CD8-positive, alpha-beta memory T cell (primary cell): ENCODE measurements at regions of chr2 and their contacts with region 1.

Region 1: GRCh38 chr2:32039447-32040219 is at the start of gene DPY30:
- DNase-seq: peak; percentile 85 to 93 (median 88)
- H3K4me3 ChIP-seq: peak within 1 kb of the TSS; percentile 66
- H3K4me3 Mint-ChIP-seq: peak within 1 kb of the TSS; percentile 87 to 94 (median 93)
- H3K27ac ChIP-seq: peak within 1 kb of the TSS; percentile 71
- H3K27ac Mint-ChIP-seq: peak within 1 kb of the TSS; percentile 88 to 99 (median 95)
- H3K4me1 ChIP-seq: peaks cover 12% of the 10 kb centered on the region
- H3K4me1 Mint-ChIP-seq: peaks cover 17 to 24% (median 24%) of the 10 kb centered on the region in 3 donors
- H3K27me3 ChIP-seq: no peaks in the 10 kb centered on the region
- H3K27me3 Mint-ChIP-seq: no peaks in the 10 kb centered on the region
- total RNA-seq, gene DPY30: 78.2 to 82.7 TPM

Region 2: DNA sequence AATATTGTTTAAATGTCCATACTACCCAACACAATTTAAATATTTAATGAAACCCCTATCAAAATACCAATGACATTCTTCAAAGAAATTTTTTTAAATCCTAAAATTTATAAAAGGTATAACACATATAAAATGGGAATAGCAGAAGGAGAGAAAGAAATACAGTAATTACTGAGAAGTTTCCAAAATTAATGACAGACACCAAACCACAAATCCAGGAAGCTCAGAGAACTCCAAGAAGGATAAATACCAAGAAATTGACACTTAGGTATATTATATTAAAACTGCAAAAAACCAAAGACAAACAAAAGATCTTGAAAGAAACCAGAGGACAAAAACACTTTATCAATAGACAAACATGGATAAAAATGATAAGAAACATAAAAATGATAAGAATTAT is 130.0 kb before region 1 on chr2:
- CTCF ChIA-PET with region 1: no interaction called
- POLR2A ChIA-PET with region 1: no interaction called
- DNase-seq: no peak
- H3K4me3 ChIP-seq: no peak overlapping the region
- H3K4me3 Mint-ChIP-seq: no peak overlapping the region
- H3K27ac ChIP-seq: no peak overlapping the region
- H3K27ac Mint-ChIP-seq: peak overlapping the region in 1 of 8 donors; percentile 43
- H3K4me1 ChIP-seq: no peaks in the 10 kb centered on the region
- H3K4me1 Mint-ChIP-seq: peaks cover 14 to 26% (median 15%) of the 10 kb centered on the region in 3 donors
- H3K27me3 ChIP-seq: no peaks in the 10 kb centered on the region
- H3K27me3 Mint-ChIP-seq: no peaks in the 10 kb centered on the region

Region 3: DNA sequence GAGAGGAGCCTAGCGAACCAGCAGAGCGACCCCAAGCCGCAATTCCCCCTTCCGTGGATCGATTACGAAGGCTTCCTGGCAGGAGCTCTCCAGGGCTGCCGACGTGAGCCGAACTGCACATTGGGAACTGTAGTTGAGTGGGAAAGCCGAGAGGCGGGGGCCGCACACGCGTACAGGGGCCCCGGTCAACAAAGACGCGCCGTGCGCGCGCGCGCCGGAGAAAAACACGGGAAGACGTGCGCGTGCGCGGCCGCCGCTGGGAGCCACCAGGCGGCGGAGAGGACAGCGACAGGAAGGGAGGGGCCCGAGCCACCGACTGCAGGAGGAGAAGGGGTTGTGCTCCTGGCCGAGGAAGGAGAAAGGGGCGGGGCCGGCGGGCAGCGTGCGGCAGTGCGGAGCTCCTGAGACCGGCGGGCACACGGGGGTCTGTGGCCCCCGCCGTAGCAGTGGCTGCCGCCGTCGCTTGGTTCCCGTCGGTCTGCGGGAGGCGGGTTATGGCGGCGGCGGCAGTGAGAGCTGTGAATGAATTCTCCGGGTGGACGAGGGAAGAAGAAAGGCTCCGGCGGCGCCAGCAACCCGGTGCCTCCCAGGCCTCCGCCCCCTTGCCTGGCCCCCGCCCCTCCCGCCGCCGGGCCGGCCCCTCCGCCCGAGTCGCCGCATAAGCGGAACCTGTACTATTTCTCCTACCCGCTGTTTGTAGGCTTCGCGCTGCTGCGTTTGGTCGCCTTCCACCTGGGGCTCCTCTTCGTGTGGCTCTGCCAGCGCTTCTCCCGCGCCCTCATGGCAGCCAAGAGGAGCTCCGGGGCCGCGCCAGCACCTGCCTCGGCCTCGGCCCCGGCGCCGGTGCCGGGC is 23.9 kb after region 1 on chr2 and contains the start of gene SPAST:
- CTCF ChIA-PET with region 1: interaction called, 8 read pairs
- POLR2A ChIA-PET with region 1: interaction called, 24 read pairs
- DNase-seq: peak; percentile 95 to 96 (median 96)
- H3K4me3 ChIP-seq: peak within 1 kb of the TSS; percentile 92
- H3K4me3 Mint-ChIP-seq: peak within 1 kb of the TSS; percentile 94 to 100 (median 98)
- H3K27ac ChIP-seq: peak within 1 kb of the TSS; percentile 84
- H3K27ac Mint-ChIP-seq: peak within 1 kb of the TSS; percentile 85 to 98 (median 94)
- H3K4me1 ChIP-seq: peaks cover 18% of the 10 kb centered on the region
- H3K4me1 Mint-ChIP-seq: peaks cover 27 to 42% (median 39%) of the 10 kb centered on the region in 3 donors
- H3K27me3 ChIP-seq: no peaks in the 10 kb centered on the region
- H3K27me3 Mint-ChIP-seq: no peaks in the 10 kb centered on the region
- total RNA-seq, gene SPAST: 19.7 to 20.4 TPM